ENCODE measurements at regions of chr2 and their contacts with region 1.

Region 1: GRCh38 chr2:86079981-86080911 is 25.4 kb downstream of the POLR1A start:
- DNase-seq: no peak
- H3K4me3 ChIP-seq: no peak overlapping the region
- CTCF ChIP-seq: peak; percentile 88

Region 2: DNA sequence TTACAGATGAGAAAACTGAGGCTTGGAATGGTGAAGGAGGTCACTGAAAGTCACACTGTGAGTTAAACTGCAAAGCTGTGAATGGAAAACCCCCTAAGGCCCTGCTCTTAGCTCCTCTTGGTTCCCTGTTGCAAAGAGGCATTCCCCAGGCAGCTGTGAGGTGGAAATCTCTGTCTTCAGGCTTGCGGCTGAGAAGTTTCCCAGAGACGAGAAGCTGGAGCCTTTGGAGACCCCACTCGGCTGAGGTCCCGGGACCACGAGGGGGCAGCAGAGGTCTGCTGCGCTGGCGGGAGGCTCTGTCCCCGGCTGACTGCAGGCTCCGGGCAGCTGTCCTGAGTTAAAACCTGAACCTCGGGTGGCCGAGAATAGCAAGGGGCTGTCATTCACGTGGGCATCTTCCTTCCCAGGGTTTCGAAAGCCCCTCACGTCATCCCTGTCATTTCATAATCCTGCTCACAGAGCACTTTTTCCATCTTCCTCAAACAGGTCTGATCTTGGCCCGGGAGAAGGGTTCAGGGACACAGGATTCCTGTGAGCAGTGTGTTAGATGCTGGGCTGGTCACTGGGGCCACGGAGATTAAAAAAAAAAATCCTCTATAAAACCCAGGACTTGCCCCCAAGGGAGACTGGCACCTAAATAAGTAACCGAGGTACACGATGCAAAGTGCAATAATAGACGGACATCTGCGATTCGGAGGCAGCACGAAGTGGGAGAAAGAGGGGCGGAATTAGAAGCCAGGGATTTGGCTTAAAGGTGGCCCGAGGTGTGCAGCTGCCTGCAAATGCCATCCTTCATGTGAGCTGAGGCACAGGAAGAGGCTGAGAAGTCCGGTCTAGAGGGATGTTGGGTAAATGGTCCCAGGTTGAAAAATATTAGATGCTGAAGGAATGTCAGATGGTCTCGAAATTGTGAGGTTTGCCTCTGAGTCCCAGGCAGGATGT is 351.1 kb before region 1 on chr2:
- CTCF ChIA-PET with region 1: interaction called, 16 read pairs
- POLR2A ChIA-PET with region 1: no interaction called
- DNase-seq: no peak
- H3K4me3 ChIP-seq: no peak overlapping the region
- CTCF ChIP-seq: peak; percentile 98

Region 3: GRCh38 chr2:85843543-85843942 is 236.7 kb before region 1 on chr2:
- CTCF ChIA-PET with region 1: interaction called, 20 read pairs
- POLR2A ChIA-PET with region 1: interaction called, 3 read pairs
- DNase-seq: no peak
- H3K4me3 ChIP-seq: no peak overlapping the region
- CTCF ChIP-seq: peak; percentile 19

Region 4: GRCh38 chr2:85865539-85866164 is 214.6 kb before region 1 on chr2:
- CTCF ChIA-PET with region 1: interaction called, 16 read pairs
- POLR2A ChIA-PET with region 1: no interaction called
- DNase-seq: no peak
- H3K4me3 ChIP-seq: no peak overlapping the region
- CTCF ChIP-seq: no peak

Region 5: DNA sequence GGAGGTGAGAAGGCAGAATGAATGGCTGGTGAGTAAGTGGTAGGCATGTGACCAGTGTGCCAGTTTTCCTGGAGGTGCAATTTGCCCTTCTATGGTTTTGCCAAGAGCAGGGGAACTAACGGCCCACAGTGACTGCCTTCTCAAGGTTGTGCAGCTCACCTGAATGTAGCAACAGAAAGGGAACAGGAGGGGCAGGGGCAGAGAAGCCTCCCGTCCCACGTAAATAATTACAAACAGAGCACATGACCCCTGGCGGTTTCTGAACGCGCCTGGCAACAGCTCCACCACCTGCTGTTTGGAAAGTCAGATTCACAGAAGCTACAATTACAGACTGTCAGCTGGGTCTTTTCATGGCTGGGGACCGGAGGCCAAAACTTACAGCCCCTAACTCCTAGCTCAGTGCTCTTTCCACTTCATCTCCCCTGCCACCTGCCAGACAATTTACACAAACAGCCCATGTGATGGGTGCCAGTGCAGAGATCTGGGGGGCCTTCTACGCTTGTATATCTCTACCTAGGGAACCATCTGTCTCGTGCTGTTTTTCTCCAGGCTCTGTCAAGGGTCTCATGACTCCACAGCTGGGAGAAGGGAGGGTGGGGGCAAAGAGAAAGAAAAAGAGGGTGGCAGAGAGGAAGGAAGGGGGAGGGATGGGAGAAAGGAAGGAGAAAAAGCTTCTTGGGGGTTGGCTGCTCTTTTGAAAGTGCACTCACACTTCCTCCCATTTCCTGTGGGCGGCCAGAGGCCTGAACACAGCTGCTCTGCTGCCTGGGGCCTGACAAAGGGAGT is 44.2 kb before region 1 on chr2:
- CTCF ChIA-PET with region 1: interaction called, 11 read pairs
- POLR2A ChIA-PET with region 1: no interaction called
- DNase-seq: no peak
- H3K4me3 ChIP-seq: no peak overlapping the region
- CTCF ChIP-seq: peak; percentile 51

Region 6: GRCh38 chr2:86094229-86094628 is 14.0 kb after region 1 on chr2:
- CTCF ChIA-PET with region 1: interaction called, 78 read pairs
- POLR2A ChIA-PET with region 1: interaction called, 4 read pairs
- DNase-seq: no peak
- H3K4me3 ChIP-seq: no peak overlapping the region
- CTCF ChIP-seq: no peak